H1 (cell line): ENCODE measurements at regions of chr22 and their contacts with region 1.

Region 1: GRCh38 chr22:44828193-44828592 is 75.8 kb downstream of the ARHGAP8 start:
- DNase-seq: peak in 1 of 2 experiments; percentile 88
- H3K4me3 ChIP-seq: no peak overlapping the region
- H3K27ac ChIP-seq: no peak overlapping the region
- H3K4me1 ChIP-seq: no peaks in the 10 kb centered on the region
- H3K27me3 ChIP-seq: no peaks in the 10 kb centered on the region
- CTCF ChIP-seq: peak; percentile 64 to 73 (median 65)
- EP300 ChIP-seq: no peak
- POLR2A ChIP-seq: no peak
- RAD21 ChIP-seq: peak; percentile 54 to 63

Region 2: GRCh38 chr22:44838316-44839016 is 10.3 kb after region 1 on chr22:
- CTCF ChIA-PET with region 1: interaction called, 22 read pairs
- POLR2A ChIA-PET with region 1: interaction called, 5 read pairs
- DNase-seq: no peak
- H3K4me3 ChIP-seq: no peak overlapping the region
- H3K27ac ChIP-seq: no peak overlapping the region
- H3K4me1 ChIP-seq: peaks cover 0 to 20% (median 9%) of the 10 kb centered on the region in 4 experiments; a peak in 5 of 7 replicates
- H3K27me3 ChIP-seq: no peaks in the 10 kb centered on the region; a peak in 1 of 7 replicates
- CTCF ChIP-seq: no peak
- EP300 ChIP-seq: no peak
- POLR2A ChIP-seq: no peak
- RAD21 ChIP-seq: no peak

Region 3: DNA sequence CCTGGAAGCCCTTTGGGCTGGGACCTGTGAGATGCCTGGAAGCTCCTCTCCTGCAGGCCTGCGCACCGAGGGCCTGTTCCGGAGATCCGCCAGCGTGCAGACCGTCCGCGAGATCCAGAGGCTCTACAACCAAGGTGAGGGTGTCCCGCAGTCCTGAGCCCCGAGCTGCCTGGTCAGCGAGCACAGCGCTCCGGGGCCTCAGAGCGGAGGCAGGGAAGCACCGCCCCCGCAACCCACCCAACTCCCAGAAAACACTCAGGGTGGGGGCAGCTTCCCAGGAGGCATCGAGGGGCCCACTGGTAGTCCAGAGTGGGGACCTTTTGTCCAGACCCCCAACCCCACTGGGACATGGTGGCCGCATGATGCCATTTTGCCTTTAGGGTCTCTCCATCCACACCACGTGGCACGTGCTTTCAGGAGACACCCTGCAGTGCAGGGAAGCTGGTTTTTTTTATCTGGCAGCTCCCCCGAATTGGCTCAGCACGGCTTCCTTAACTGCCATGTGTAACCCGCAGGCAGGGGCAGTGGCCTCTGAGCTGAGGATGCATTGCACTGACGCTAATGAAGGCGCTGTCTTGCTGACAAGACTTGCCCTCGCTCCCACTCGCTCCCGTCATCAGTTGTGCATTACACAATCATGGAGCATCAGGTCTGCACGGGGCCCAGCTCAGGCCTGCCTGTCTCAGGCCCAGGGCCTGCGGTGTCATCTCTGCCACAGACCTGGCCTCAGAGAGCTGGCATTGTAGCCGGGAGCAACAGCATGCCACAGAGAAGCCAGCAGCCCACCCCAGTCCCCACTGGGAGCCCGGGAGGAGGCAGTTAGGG is 19.9 kb after region 1 on chr22:
- CTCF ChIA-PET with region 1: interaction called, 12 read pairs
- POLR2A ChIA-PET with region 1: no interaction called
- DNase-seq: no peak
- H3K4me3 ChIP-seq: no peak overlapping the region
- H3K27ac ChIP-seq: no peak overlapping the region
- H3K4me1 ChIP-seq: no peaks in the 10 kb centered on the region
- H3K27me3 ChIP-seq: no peaks in the 10 kb centered on the region
- CTCF ChIP-seq: no peak
- EP300 ChIP-seq: no peak
- POLR2A ChIP-seq: no peak
- RAD21 ChIP-seq: no peak

Region 4: DNA sequence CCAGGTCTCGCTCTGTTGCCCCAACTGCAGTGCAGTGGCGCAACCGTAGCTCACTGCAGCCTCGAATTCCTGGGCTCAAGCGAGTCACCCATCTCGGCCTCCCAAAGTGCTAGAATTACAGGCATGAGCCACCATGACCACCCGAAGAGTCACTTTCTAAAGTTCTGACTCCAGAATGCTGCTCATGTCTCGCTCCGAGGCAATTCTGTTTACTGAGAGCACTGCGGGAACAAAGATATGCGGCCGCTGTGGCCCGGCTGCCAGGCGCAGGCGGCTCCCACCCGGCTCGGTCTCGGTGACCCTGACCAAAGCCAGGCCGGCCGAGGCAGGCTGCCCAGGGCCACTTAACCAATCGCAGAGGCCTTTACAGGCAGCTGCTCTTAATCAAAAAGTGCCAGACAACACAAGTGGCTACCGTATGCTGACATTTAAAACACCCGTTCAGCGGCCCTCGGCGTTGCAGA is 102.9 kb after region 1 on chr22:
- CTCF ChIA-PET with region 1: no interaction called
- POLR2A ChIA-PET with region 1: no interaction called
- DNase-seq: no peak
- H3K4me3 ChIP-seq: no peak overlapping the region
- H3K27ac ChIP-seq: no peak overlapping the region
- H3K4me1 ChIP-seq: no peaks in the 10 kb centered on the region; a peak in 1 of 7 replicates
- H3K27me3 ChIP-seq: no peaks in the 10 kb centered on the region
- CTCF ChIP-seq: no peak
- EP300 ChIP-seq: no peak
- POLR2A ChIP-seq: no peak
- RAD21 ChIP-seq: no peak